ENCODE measurements at regions of chr7 and their contacts with region 1.

Region 1: DNA sequence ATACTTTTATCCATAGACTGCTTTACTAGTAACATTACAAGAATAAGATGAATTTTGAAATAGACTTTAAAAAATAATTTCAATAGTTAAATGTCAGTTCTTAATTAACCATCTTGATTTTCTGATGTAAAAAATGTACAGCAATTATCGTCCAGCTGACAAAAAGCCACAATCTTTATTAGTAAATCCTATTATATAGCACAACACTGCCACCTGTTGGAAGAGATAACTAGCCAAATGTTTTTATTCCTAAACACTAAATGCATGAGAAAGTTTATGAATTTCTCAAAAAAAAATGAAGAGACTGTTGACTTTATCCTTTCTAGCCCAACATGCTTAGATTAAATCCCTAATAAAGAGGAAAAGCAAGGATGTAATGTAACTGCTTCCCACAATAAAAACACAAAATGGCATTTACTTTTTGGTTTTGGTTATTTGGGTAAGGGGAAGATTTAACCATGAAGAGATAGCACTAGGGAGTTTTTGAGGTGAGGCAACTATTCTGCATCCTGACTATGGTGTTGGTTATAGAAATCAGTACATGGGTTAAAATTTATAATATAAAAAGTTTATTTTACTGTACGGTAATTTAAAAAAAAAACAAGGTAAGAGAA is 8.0 kb downstream of the COA1 start:
- DNase-seq: peak in 7 of 9 donors; percentile 44 to 65 (median 54)
- ATAC-seq: peak; percentile 61
- H3K4me3 ChIP-seq: no peak overlapping the region
- H3K4me3 Mint-ChIP-seq: no peak overlapping the region
- H3K27ac ChIP-seq: no peak overlapping the region
- H3K27ac Mint-ChIP-seq: peak overlapping the region in 3 of 9 donors; percentile 18 to 79 (median 77)
- H3K4me1 ChIP-seq: peaks cover 0 to 4% of the 10 kb centered on the region in 2 donors
- H3K4me1 Mint-ChIP-seq: peaks cover 22 to 73% (median 57%) of the 10 kb centered on the region in 7 donors
- H3K27me3 ChIP-seq: no peaks in the 10 kb centered on the region
- H3K27me3 Mint-ChIP-seq: no peaks in the 10 kb centered on the region

Region 2: GRCh38 chr7:43260980-43261878 is 460.1 kb before region 1 on chr7:
- CTCF ChIA-PET with region 1: no interaction called
- POLR2A ChIA-PET with region 1: no interaction called
- intact Hi-C with region 1: loop called (anchors 1 kb)
- DNase-seq: peak; percentile 6 to 65 (median 38)
- ATAC-seq: peak; percentile 65
- H3K4me3 ChIP-seq: no peak overlapping the region
- H3K4me3 Mint-ChIP-seq: no peak overlapping the region
- H3K27ac ChIP-seq: no peak overlapping the region
- H3K27ac Mint-ChIP-seq: no peak overlapping the region
- H3K4me1 ChIP-seq: no peaks in the 10 kb centered on the region
- H3K4me1 Mint-ChIP-seq: no peaks in the 10 kb centered on the region
- H3K27me3 ChIP-seq: no peaks in the 10 kb centered on the region
- H3K27me3 Mint-ChIP-seq: peaks cover 0 to 18% (median 7%) of the 10 kb centered on the region in 5 donors

Region 3: DNA sequence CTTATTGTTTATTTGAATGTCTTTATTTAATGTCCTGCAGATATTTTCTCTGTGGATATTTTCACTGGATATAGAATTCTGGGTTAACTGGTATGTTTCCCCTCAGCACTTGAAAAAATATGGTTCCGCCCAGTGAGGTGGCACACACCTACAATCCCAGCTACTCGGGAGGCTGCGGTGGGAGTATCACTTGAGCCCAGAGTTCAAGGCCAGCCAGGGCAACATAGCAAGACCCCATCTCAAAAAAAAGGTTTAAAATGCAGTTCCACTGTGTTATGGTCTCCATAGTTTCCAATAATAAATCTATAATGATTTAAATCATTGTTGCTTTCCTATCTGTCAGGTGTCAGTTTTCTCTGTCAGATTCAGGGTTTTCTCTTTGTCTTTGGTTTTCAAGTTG is 303.8 kb before region 1 on chr7:
- CTCF ChIA-PET with region 1: no interaction called
- POLR2A ChIA-PET with region 1: no interaction called
- intact Hi-C with region 1: loop called in 1 of 2 experiments (anchors 5 kb)
- DNase-seq: no peak
- ATAC-seq: no peak
- H3K4me3 ChIP-seq: no peak overlapping the region
- H3K4me3 Mint-ChIP-seq: no peak overlapping the region
- H3K27ac ChIP-seq: no peak overlapping the region
- H3K27ac Mint-ChIP-seq: no peak overlapping the region
- H3K4me1 ChIP-seq: no peaks in the 10 kb centered on the region
- H3K4me1 Mint-ChIP-seq: no peaks in the 10 kb centered on the region
- H3K27me3 ChIP-seq: no peaks in the 10 kb centered on the region
- H3K27me3 Mint-ChIP-seq: peaks cover under 1 to 29% (median 20%) of the 10 kb centered on the region in 5 donors

Region 4: DNA sequence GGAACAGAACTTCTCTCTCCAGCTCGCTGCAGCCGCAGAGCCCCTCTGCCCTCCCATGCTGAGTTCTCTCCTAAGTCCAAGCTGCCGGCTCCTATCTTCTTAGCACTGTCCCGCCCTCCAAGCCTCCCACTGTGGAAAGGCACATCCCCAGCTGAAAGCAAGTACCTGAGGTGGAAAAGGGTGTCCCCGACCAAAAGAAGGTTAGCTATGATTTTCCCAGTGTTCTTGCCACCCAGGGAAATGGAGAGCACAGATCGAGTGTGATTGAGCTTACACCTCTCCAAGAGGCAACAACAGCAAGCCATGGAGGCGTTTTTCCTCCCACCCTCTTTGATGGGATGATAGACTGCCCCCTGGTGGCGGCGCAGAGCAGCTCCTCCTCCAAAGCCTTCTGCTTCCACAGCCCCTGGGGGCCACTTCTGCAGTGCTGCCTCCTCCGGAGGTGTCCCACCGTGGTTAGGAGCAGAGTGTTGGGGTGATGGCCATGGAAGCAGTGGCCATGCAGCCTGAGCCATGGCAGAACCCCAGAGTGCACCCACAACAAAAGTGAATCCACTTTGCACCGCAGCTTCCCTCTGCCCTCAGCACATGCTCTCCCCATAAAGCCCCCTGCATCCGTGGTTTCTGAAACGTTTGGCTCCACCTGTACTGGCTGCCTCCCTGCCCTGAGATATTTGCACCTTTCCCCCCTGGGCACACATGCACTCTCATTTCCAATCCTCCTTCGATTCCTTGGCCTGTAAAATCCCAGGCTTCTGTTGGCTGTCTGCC is 281.5 kb before region 1 on chr7:
- CTCF ChIA-PET with region 1: no interaction called
- POLR2A ChIA-PET with region 1: no interaction called
- intact Hi-C with region 1: loop called in 1 of 2 experiments (anchors 5 kb)
- DNase-seq: peak in 6 of 9 donors; percentile 3 to 65 (median 18)
- ATAC-seq: peak; percentile 76
- H3K4me3 ChIP-seq: no peak overlapping the region
- H3K4me3 Mint-ChIP-seq: no peak overlapping the region
- H3K27ac ChIP-seq: no peak overlapping the region
- H3K27ac Mint-ChIP-seq: no peak overlapping the region
- H3K4me1 ChIP-seq: no peaks in the 10 kb centered on the region
- H3K4me1 Mint-ChIP-seq: peaks cover 0 to 4% (median 2%) of the 10 kb centered on the region in 7 donors
- H3K27me3 ChIP-seq: no peaks in the 10 kb centered on the region
- H3K27me3 Mint-ChIP-seq: peaks cover 0 to 7% (median 0%) of the 10 kb centered on the region in 5 donors

Region 5: DNA sequence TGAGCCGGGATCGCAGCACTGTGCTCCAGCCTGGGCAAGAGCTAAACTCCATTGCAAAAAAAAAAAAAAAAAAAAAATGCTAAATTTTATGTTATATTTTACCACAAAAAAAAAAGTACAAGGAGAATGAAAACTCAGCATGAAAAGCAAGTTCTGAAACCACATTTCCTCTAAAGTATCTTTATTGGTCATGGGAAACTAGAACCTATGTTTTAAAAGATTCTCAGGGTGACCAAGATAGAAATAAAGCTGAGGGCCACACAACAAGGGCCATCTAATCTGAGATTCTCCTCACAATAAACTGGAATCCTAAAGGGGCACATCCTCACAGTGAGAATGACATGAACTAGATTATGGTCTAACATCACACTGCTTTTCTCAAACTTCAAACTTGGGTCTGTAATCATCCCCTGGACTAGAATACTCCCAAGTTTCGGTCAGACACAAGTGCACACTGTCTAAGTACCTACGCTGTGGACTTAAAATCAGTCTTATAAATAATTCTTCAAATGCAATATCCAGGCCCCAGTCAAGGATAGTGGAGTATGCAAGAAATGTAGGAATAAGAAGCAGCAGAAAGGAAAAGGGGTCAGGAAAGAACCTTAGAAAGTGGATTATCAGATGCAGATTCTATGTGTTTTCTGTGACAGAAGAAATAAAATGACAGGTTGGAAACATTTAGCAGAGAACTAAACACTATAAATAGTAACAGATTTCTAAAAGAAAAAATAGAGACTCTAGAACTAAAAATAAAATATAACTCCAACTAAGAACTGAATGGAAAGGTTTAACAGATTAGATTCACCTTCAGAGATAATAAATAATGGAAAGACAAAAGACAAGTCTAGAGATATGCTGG is 41.9 kb before region 1 on chr7:
- CTCF ChIA-PET with region 1: no interaction called
- POLR2A ChIA-PET with region 1: no interaction called
- intact Hi-C with region 1: no loop called
- DNase-seq: peak in 3 of 9 donors; percentile 16 to 34 (median 22)
- ATAC-seq: no peak
- H3K4me3 ChIP-seq: no peak overlapping the region
- H3K4me3 Mint-ChIP-seq: peak overlapping the region in 9 of 10 donors; percentile 21 to 72 (median 51)
- H3K27ac ChIP-seq: peak overlapping the region; percentile 21
- H3K27ac Mint-ChIP-seq: peak overlapping the region; percentile 30 to 95 (median 87)
- H3K4me1 ChIP-seq: peaks cover 22 to 24% of the 10 kb centered on the region in 2 donors
- H3K4me1 Mint-ChIP-seq: peaks cover 38 to 92% (median 86%) of the 10 kb centered on the region in 7 donors
- H3K27me3 ChIP-seq: no peaks in the 10 kb centered on the region
- H3K27me3 Mint-ChIP-seq: no peaks in the 10 kb centered on the region